HCT116 (cell line): ENCODE measurements at regions of chr5 and their contacts with region 1.

Region 1: GRCh38 chr5:92909602-92909962 is 671.4 kb downstream of the NR2F1-AS1 start:
- DNase-seq: no peak
- ATAC-seq: peak; percentile 82
- H3K4me3 ChIP-seq: no peak overlapping the region
- H3K27ac ChIP-seq: peak overlapping the region; percentile 68
- H3K4me1 ChIP-seq: peaks cover 26 to 36% of the 10 kb centered on the region in 2 experiments
- H3K27me3 ChIP-seq: no peaks in the 10 kb centered on the region
- CTCF ChIP-seq: peak; percentile 41 to 76 (median 73); a peak in 5 of 6 replicates
- POLR2A ChIP-seq: no peak
- RAD21 ChIP-seq: peak; percentile 60

Region 2: GRCh38 chr5:93249651-93250289 is 340.2 kb after region 1 on chr5:
- CTCF ChIA-PET with region 1: no interaction called
- POLR2A ChIA-PET with region 1: no interaction called
- RAD21 ChIA-PET with region 1: interaction called in 1 of 2 experiments, 3 read pairs
- intact Hi-C with region 1: loop called (anchors 5 kb)
- DNase-seq: peak; percentile 34
- ATAC-seq: peak; percentile 75
- H3K4me3 ChIP-seq: peak overlapping the region; percentile 34 to 64
- H3K27ac ChIP-seq: peak overlapping the region; percentile 96
- H3K4me1 ChIP-seq: peaks cover 29 to 45% of the 10 kb centered on the region in 2 experiments
- H3K27me3 ChIP-seq: no peaks in the 10 kb centered on the region
- CTCF ChIP-seq: no peak
- POLR2A ChIP-seq: no peak
- RAD21 ChIP-seq: no peak

Region 3: DNA sequence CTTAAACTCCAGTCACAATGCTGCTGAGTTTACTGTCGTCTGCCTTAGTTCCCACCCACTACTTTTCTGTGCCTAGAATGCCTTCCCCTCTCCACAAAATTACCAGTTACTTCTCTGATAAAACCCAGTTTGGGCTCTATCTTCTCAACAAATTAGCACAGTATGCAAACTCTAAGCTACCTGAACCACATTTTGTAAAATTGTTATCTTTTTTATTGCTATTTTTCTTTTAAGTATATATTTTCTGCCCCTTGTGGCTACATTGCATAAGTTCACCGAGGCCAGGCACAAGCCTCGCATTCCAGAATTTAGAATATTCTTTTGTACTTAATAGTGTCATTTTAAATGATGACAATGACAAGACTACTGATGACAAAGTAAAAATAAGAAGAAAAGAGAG is 771.9 kb after region 1 on chr5:
- CTCF ChIA-PET with region 1: no interaction called
- POLR2A ChIA-PET with region 1: no interaction called
- RAD21 ChIA-PET with region 1: no interaction called
- intact Hi-C with region 1: loop called (anchors 10 kb)
- DNase-seq: no peak
- ATAC-seq: no peak
- H3K4me3 ChIP-seq: no peak overlapping the region
- H3K27ac ChIP-seq: no peak overlapping the region
- H3K4me1 ChIP-seq: peaks cover 22 to 25% of the 10 kb centered on the region in 2 experiments
- H3K27me3 ChIP-seq: no peaks in the 10 kb centered on the region
- CTCF ChIP-seq: peak in 2 of 3 experiments; percentile 56 to 57; a peak in 4 of 6 replicates
- POLR2A ChIP-seq: no peak
- RAD21 ChIP-seq: 0 out of 2 replicates have a peak, but pooled peaks have one; percentile 8